ENCODE measurements at regions of chr22 and their contacts with region 1.

Region 1: GRCh38 chr22:30356449-30357235 is at the starts of genes CCDC157 and SF3A1:
- DNase-seq: peak; percentile 78 to 90 (median 86)
- ATAC-seq: peak; percentile 94
- H3K4me3 ChIP-seq: peak within 1 kb of the TSS; percentile 94
- H3K4me3 Mint-ChIP-seq: peak within 1 kb of the TSS; percentile 92 to 99 (median 95)
- H3K27ac ChIP-seq: peak within 1 kb of the TSS; percentile 100
- H3K27ac Mint-ChIP-seq: peak within 1 kb of the TSS; percentile 86 to 99 (median 95)
- H3K4me1 ChIP-seq: peaks cover 32 to 37% of the 10 kb centered on the region in 2 donors
- H3K4me1 Mint-ChIP-seq: peaks cover 35 to 62% (median 54%) of the 10 kb centered on the region in 7 donors
- H3K27me3 ChIP-seq: no peaks in the 10 kb centered on the region
- H3K27me3 Mint-ChIP-seq: peaks cover 0 to 6% (median 0%) of the 10 kb centered on the region in 5 donors
- total RNA-seq, gene CCDC157: 1.8 to 6.9 (median 3.2) TPM
- total RNA-seq, gene SF3A1: 267 to 341 (median 284) TPM

Region 2: GRCh38 chr22:30297991-30298719 is 58.5 kb before region 1 on chr22:
- CTCF ChIA-PET with region 1: no interaction called
- POLR2A ChIA-PET with region 1: interaction called, 87 read pairs
- intact Hi-C with region 1: no loop called
- DNase-seq: no peak
- ATAC-seq: no peak
- H3K4me3 ChIP-seq: no peak overlapping the region
- H3K4me3 Mint-ChIP-seq: peak overlapping the region in 9 of 10 donors; percentile 21 to 80 (median 72)
- H3K27ac ChIP-seq: peak overlapping the region; percentile 77
- H3K27ac Mint-ChIP-seq: peak overlapping the region; percentile 46 to 98 (median 97)
- H3K4me1 ChIP-seq: peaks cover 26 to 83% of the 10 kb centered on the region in 2 donors
- H3K4me1 Mint-ChIP-seq: peaks cover 47 to 99% (median 88%) of the 10 kb centered on the region in 7 donors
- H3K27me3 ChIP-seq: no peaks in the 10 kb centered on the region
- H3K27me3 Mint-ChIP-seq: no peaks in the 10 kb centered on the region

Region 3: DNA sequence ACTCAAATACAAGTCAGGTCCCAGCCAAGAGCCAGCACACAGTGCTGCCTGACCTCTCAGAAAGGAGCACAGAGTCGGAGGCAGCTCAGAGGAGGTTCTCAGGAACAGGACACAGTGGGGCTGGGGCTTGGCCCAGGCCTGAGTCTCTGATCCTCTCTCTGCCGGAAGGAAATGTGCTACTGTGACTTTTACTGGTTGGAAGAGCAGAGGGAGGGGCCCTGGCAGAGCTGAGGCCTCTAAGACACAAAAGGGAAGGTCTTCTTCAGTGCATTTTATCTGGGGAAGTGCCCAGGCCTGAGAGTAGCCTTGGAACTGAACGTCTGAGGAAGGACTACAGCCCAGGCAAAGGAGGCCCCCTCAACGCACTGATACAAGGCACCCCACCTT is 51.1 kb before region 1 on chr22:
- CTCF ChIA-PET with region 1: interaction called, 3 read pairs
- POLR2A ChIA-PET with region 1: interaction called, 64 read pairs
- intact Hi-C with region 1: loop called (anchors 1 kb)
- DNase-seq: peak in 8 of 9 donors; percentile 56 to 75 (median 68)
- ATAC-seq: peak; percentile 67
- H3K4me3 ChIP-seq: peak overlapping the region; percentile 51
- H3K4me3 Mint-ChIP-seq: peak overlapping the region; percentile 69 to 97 (median 84)
- H3K27ac ChIP-seq: peak overlapping the region; percentile 75
- H3K27ac Mint-ChIP-seq: peak overlapping the region; percentile 87 to 99 (median 97)
- H3K4me1 ChIP-seq: peaks cover 96 to 98% of the 10 kb centered on the region in 2 donors
- H3K4me1 Mint-ChIP-seq: peaks cover 82 to 100% (median 93%) of the 10 kb centered on the region in 7 donors
- H3K27me3 ChIP-seq: no peaks in the 10 kb centered on the region
- H3K27me3 Mint-ChIP-seq: no peaks in the 10 kb centered on the region

Region 4: DNA sequence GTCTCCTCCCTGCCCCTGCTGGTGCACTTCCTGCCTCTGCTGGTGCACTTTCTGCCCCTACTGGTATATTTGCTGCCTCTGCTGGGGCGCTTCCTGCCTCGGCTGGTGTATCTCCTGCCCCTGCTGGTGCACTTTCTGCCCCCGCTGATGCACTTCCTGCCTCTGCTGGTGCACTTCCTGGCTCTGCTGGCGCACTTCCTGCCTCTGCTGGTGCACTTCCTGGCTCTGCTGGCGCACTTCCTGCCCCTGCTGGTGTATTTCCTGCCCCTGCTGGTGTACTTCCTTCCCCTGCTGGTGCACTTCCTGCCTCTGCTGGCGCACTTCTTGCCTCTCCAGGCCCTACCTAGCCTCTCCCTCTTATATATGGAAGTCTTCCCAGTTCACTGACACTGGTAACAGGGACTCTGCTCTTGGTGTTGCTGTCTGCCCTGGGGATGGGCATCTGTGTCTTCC is 79.1 kb after region 1 on chr22:
- CTCF ChIA-PET with region 1: no interaction called
- POLR2A ChIA-PET with region 1: no interaction called
- intact Hi-C with region 1: loop called in 1 of 2 experiments (anchors 1 kb)
- DNase-seq: peak; percentile 45 to 97 (median 92)
- ATAC-seq: peak; percentile 94
- H3K4me3 ChIP-seq: peak overlapping the region; percentile 53
- H3K4me3 Mint-ChIP-seq: peak overlapping the region; percentile 57 to 90 (median 83)
- H3K27ac ChIP-seq: peak overlapping the region; percentile 99
- H3K27ac Mint-ChIP-seq: peak overlapping the region; percentile 88 to 100 (median 98)
- H3K4me1 ChIP-seq: peaks cover 16 to 21% of the 10 kb centered on the region in 2 donors
- H3K4me1 Mint-ChIP-seq: peaks cover 10 to 26% (median 23%) of the 10 kb centered on the region in 7 donors
- H3K27me3 ChIP-seq: peaks cover 3 to 6% of the 10 kb centered on the region in 2 donors
- H3K27me3 Mint-ChIP-seq: peaks cover 12 to 24% (median 18%) of the 10 kb centered on the region in 5 donors

Measured in naive thymus-derived CD4-positive, alpha-beta T cell (primary cell).